ENCODE measurements at regions of chr1 and their contacts with region 1.

Region 1: DNA sequence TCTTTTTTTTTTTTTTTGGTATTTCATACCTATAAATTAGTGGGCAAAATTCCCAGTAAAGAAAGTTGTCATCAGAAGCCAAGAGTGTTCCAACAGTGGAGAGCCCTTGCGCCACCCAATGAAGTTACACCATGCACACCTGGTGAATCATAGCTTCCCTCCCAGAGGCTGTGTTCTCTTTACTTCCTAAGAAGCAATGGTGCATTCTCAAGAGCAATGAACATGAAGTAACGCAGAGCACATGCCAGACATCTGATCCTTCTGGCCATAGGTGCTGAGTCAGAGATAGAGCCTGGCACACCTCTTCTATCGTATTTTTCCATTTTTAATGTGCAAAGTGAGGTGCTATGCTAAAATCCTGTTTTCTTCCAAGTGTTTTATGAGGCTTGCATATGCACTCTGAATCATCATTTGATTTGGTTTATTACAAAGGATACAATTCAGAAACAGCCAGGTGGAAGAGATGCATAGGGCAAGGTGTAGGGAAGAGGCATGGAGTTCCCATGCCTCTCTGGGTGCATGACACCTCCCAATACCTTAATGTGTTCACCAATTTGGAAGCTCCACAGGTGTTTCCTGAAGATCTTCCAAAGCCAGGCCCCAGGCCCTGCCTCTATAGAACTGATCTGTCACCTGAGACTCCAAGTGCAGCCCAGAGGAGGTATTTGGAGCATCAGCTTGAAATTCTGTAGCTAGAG is 408.0 kb downstream of the SIPA1L2 start:
- DNase-seq: peak; percentile 30
- ATAC-seq: peak; percentile 52; the same call in 1 of the 2 replicates
- H3K4me3 ChIP-seq: no peak overlapping the region
- H3K27ac ChIP-seq: no peak overlapping the region
- H3K4me1 ChIP-seq: no peaks in the 10 kb centered on the region
- H3K27me3 ChIP-seq: no peaks in the 10 kb centered on the region
- CTCF ChIP-seq: no peak

Region 2: GRCh38 chr1:232287676-232288569 is 66.0 kb after region 1 on chr1:
- CTCF ChIA-PET with region 1: no interaction called
- POLR2A ChIA-PET with region 1: no interaction called
- in situ Hi-C with region 1: no loop called
- intact Hi-C with region 1: no loop called
- DNase-seq: no peak
- ATAC-seq: no peak
- H3K4me3 ChIP-seq: no peak overlapping the region
- H3K27ac ChIP-seq: no peak overlapping the region
- H3K4me1 ChIP-seq: no peaks in the 10 kb centered on the region
- H3K27me3 ChIP-seq: no peaks in the 10 kb centered on the region
- CTCF ChIP-seq: no peak

Region 3: DNA sequence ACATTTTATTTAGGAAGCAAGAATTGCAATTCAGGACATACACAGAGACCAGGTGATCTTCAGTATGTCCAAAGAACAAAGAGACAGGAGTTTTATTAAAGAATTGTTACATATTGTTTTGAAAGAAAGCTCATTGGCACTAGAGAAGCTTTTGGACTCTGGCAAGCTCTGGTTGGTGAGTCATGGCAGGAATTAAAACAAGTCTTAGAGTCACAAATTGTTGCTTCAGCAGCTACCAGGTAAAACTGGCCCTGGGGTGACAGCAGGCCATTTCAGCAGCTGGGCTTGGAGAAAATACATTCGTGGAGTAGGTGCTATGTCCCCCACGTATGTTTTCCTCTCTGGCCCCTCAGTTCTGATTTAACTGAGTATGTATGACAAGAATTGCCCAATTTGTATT is 1164.4 kb after region 1 on chr1:
- CTCF ChIA-PET with region 1: no interaction called
- POLR2A ChIA-PET with region 1: interaction called, 20 read pairs
- in situ Hi-C with region 1: no loop called
- intact Hi-C with region 1: no loop called
- DNase-seq: no peak
- ATAC-seq: no peak
- H3K4me3 ChIP-seq: no peak overlapping the region
- H3K27ac ChIP-seq: no peak overlapping the region
- H3K4me1 ChIP-seq: no peaks in the 10 kb centered on the region
- H3K27me3 ChIP-seq: no peaks in the 10 kb centered on the region
- CTCF ChIP-seq: no peak

Measured in Panc1 (cell line).